T-cell (primary cell): ENCODE measurements at regions of chr5 and their contacts with region 1.

Region 1: GRCh38 chr5:160105686-160106360 is 13.4 kb downstream of the PWWP2A start:
- DNase-seq: no peak
- ATAC-seq: no peak
- H3K4me3 ChIP-seq: no peak overlapping the region
- H3K4me3 Mint-ChIP-seq: no peak overlapping the region
- H3K27ac ChIP-seq: no peak overlapping the region
- H3K27ac Mint-ChIP-seq: peak overlapping the region in 1 of 2 donors; percentile 19
- H3K4me1 ChIP-seq: no peaks in the 10 kb centered on the region
- H3K4me1 Mint-ChIP-seq: peaks cover 28 to 38% (median 33%) of the 10 kb centered on the region in 3 donors
- H3K27me3 ChIP-seq: no peaks in the 10 kb centered on the region
- H3K27me3 Mint-ChIP-seq: no peaks in the 10 kb centered on the region

Region 2: DNA sequence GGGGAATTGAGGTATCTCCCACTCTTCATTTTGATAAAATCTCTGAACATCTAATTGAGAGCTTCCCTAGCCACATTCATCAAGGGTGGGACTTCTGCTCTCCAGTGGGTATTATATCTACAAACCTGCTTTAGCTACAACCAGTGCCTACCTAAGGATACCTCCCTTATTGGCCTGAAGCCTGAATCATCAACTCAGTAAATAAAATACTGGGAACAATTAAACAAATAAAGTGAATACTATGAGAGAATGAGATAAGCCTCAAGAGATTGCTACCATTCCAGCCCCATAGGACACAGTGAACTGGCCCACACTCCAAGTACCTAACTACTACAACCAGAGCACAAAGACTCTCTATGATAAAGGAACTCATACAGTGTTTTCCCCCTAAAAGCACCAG is 728.2 kb before region 1 on chr5:
- CTCF ChIA-PET with region 1: no interaction called
- POLR2A ChIA-PET with region 1: no interaction called
- DNase-seq: no peak
- ATAC-seq: no peak
- H3K4me3 ChIP-seq: no peak overlapping the region
- H3K4me3 Mint-ChIP-seq: no peak overlapping the region
- H3K27ac ChIP-seq: no peak overlapping the region
- H3K27ac Mint-ChIP-seq: no peak overlapping the region
- H3K4me1 ChIP-seq: no peaks in the 10 kb centered on the region
- H3K4me1 Mint-ChIP-seq: no peaks in the 10 kb centered on the region
- H3K27me3 ChIP-seq: no peaks in the 10 kb centered on the region
- H3K27me3 Mint-ChIP-seq: peaks cover 0 to 3% of the 10 kb centered on the region in 2 donors

Region 3: GRCh38 chr5:160390787-160391696 is 285.2 kb after region 1 on chr5:
- CTCF ChIA-PET with region 1: interaction called in 1 of 2 experiments, 10 read pairs
- POLR2A ChIA-PET with region 1: interaction called in 1 of 2 experiments, 7 read pairs
- DNase-seq: peak in 1 of 35 experiments; percentile 39
- ATAC-seq: no peak
- H3K4me3 ChIP-seq: no peak overlapping the region
- H3K4me3 Mint-ChIP-seq: no peak overlapping the region
- H3K27ac ChIP-seq: no peak overlapping the region
- H3K27ac Mint-ChIP-seq: no peak overlapping the region
- H3K4me1 ChIP-seq: no peaks in the 10 kb centered on the region
- H3K4me1 Mint-ChIP-seq: no peaks in the 10 kb centered on the region
- H3K27me3 ChIP-seq: no peaks in the 10 kb centered on the region
- H3K27me3 Mint-ChIP-seq: no peaks in the 10 kb centered on the region